IMR-90 (cell line): ENCODE measurements at regions of chr15 and their contacts with region 1.

Region 1: DNA sequence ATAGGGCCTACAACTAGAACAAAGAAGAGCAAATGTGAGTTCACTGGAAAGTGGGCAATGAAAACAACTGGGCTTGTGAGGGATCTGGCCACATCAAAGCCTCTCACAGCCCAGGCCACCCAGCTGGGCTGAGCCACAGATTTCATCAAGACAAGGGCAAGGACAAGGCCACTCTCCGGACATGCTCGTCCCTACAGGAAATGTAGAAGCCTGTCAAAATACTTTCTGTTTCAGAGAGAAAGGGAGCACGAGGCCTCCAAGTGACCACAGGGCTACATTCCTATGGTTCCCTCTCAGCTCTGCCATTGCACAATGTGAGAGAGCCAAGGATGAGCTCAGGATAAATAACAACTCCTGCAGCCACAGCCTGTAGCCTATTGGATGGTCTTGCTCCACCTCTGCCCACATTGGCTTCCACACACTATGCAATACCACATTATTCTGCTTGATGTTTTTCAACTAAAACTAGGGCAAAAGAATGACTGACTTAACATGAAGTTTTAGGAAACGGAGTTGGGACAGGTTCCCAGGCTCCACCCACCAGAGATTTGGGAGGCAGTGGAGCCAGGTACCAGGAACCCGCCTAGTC is 12.1 kb downstream of the TBC1D2B start:
- DNase-seq: peak; percentile 99
- ATAC-seq: peak; percentile 84
- H3K4me3 ChIP-seq: peak overlapping the region; percentile 8; the same call in 1 of the 2 replicates
- H3K27ac ChIP-seq: peak overlapping the region; percentile 95
- H3K4me1 ChIP-seq: peaks cover 51% of the 10 kb centered on the region
- H3K27me3 ChIP-seq: no peaks in the 10 kb centered on the region
- CTCF ChIP-seq: no peak
- POLR2A ChIP-seq: peak; percentile 69
- RAD21 ChIP-seq: no peak

Region 2: DNA sequence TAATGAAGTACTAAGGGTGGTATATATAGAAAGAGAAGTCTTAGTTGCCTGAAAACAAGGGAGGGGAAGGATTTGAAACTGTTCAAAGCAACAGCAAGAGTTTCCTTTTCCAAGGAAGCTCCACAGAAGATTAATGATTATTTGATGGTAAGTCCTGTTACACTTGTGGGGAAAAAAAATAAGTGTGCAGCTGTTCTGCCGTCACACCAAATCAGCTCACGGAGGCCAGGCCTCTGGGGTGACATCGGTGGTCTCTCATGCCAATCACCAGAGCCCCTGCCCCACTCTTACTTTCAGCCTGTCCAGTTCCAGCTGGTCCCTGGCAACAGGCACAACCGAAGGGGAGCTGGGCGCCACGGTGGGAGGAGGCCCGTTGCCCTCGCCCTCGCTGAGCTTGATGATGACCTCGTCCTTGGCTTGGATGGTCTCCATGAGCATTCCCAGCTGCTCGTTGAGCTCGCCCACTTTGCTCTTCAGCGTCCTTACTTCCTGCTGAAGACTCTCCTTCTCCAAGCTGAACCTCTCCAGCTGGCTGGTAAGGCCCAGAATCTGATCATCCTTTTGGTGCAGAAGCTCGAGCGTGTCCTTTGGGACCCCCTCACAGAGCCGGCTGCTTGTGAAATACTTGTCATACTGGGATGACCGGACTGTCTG is 41.4 kb before region 1 on chr15:
- CTCF ChIA-PET with region 1: no interaction called
- POLR2A ChIA-PET with region 1: no interaction called
- dilution Hi-C with region 1: no loop called
- in situ Hi-C with region 1: no loop called
- intact Hi-C with region 1: loop called (anchors 2 kb)
- DNase-seq: peak; percentile 57
- ATAC-seq: peak; percentile 81
- H3K4me3 ChIP-seq: no peak overlapping the region
- H3K27ac ChIP-seq: peak overlapping the region; percentile 48; the same call in 1 of the 2 replicates
- H3K4me1 ChIP-seq: peaks cover 9% of the 10 kb centered on the region
- H3K27me3 ChIP-seq: no peaks in the 10 kb centered on the region
- CTCF ChIP-seq: no peak
- POLR2A ChIP-seq: no peak
- RAD21 ChIP-seq: no peak